Posterior vena cava (tissue), 2 donors: ENCODE measurements at regions of chr1 and their contacts with region 1.

Region 1: GRCh38 chr1:156608036-156608674 is 6.9 kb upstream of the GPATCH4 start:
- DNase-seq: no peak

Region 2: DNA sequence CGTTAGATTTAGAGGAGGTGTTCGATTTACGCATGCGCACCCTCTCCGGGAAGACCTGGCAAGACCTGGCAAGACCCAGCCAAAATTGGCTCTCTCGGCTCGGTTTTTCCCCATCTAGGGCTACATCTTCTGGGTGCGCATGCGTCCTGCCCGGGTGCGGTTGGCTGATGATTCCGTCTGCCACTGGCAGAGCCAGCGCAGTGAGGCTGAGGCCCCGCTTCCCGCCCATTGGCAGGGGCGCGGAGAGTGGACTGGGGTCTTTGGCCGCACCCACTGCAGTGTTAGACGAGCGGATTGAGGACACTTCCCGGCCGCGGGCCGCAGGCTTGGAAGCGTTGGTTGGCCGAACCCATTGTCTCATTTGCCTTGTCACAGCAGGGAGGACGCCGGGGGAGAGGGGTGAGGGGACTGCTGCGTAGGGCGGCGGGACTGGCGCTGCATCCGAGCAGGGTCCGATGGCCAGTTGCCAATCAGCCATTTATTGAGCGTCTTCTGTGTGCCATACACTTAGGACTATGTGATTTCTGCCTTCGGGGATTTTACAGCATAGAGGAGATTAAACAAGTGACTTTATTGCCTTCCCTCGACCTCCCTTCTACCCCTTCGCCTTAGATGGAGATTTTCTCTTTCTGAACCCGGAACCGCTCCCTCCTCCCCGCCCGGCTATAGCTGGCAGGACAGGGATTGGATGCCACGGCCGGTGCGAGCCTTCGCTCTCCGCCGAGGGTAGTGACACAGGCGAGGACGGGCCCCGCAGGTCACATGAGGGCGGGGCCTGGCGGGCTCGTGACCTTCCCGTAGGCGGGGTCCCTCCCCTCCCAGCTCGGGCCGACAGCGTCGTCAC is 151.3 kb before region 1 on chr1:
- intact Hi-C with region 1: loop called in 1 of 2 experiments (anchors 5 kb)
- DNase-seq: peak; percentile 99